Esophagus muscularis mucosa (tissue), 4 donors: ENCODE measurements at regions of chr3 and their contacts with region 1.

Region 1: DNA sequence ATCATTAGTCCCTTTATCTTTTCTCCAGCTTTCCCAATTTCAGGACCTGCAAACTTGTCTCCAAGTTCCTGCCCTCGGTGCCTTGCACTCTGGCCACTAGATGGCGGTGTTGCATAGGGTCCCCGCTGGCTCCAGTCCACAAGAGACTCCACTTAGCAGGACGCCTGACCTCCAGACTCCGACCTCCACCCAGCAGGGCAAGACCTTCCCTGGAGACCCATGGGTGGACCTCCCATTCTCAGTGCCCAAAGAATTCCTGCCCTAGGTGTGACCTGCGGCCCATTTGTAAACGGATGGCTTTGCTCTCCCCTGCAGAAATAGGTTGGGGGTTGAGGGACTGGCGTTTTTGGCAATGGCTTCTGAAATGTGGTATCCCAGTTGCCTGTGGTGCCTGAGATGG is 82.6 kb downstream of the LSM3 start:
- DNase-seq: peak; percentile 95
- H3K4me3 ChIP-seq: no peak overlapping the region
- H3K27ac ChIP-seq: no peak overlapping the region
- H3K4me1 ChIP-seq: peaks cover 3 to 7% (median 4%) of the 10 kb centered on the region in 4 donors
- H3K27me3 ChIP-seq: no peaks in the 10 kb centered on the region
- CTCF ChIP-seq: peak; percentile 95 to 98 (median 97)
- EP300 ChIP-seq: no peak
- POLR2A ChIP-seq: no peak

Region 2: GRCh38 chr3:14031271-14031670 is 230.0 kb before region 1 on chr3:
- intact Hi-C with region 1: no loop called
- DNase-seq: no peak
- H3K4me3 ChIP-seq: no peak overlapping the region
- H3K27ac ChIP-seq: no peak overlapping the region
- H3K4me1 ChIP-seq: no peaks in the 10 kb centered on the region
- H3K27me3 ChIP-seq: no peaks in the 10 kb centered on the region
- CTCF ChIP-seq: no peak
- EP300 ChIP-seq: no peak
- POLR2A ChIP-seq: no peak

Region 3: GRCh38 chr3:14203521-14204079 is 57.6 kb before region 1 on chr3:
- intact Hi-C with region 1: loop called (anchors 5 kb)
- DNase-seq: no peak
- H3K4me3 ChIP-seq: no peak overlapping the region
- H3K27ac ChIP-seq: peak overlapping the region in 1 of 4 donors; percentile 51
- H3K4me1 ChIP-seq: peaks cover 8 to 27% (median 16%) of the 10 kb centered on the region in 4 donors
- H3K27me3 ChIP-seq: no peaks in the 10 kb centered on the region
- CTCF ChIP-seq: peak; percentile 76 to 85 (median 82)
- EP300 ChIP-seq: no peak
- POLR2A ChIP-seq: no peak

Region 4: DNA sequence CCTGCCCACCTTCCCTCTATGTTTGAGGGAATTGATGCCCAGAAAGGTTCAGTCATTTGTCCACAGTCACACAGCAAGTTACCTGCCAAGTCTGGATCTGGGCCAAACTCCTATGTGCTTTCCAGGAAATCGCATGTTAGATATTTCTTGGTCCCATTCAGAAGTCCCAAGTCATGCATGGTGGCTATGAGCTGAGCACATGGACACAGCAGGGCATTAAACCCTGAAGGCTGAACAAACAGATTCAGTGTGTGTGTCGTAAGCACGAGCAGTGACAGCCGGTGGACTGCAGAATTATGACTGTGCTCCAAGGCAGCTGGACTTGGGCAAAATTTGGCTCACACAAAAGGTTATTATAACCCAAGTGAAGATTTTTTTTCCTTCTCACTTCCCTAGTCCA is 129.8 kb after region 1 on chr3:
- intact Hi-C with region 1: loop called (anchors 10 kb)
- DNase-seq: no peak
- H3K4me3 ChIP-seq: no peak overlapping the region
- H3K27ac ChIP-seq: peak overlapping the region; percentile 45 to 59 (median 50)
- H3K4me1 ChIP-seq: peaks cover 0 to 43% (median 40%) of the 10 kb centered on the region in 4 donors
- H3K27me3 ChIP-seq: peaks cover 0 to 6% (median 0%) of the 10 kb centered on the region in 4 donors
- CTCF ChIP-seq: no peak
- EP300 ChIP-seq: no peak
- POLR2A ChIP-seq: no peak

Region 5: DNA sequence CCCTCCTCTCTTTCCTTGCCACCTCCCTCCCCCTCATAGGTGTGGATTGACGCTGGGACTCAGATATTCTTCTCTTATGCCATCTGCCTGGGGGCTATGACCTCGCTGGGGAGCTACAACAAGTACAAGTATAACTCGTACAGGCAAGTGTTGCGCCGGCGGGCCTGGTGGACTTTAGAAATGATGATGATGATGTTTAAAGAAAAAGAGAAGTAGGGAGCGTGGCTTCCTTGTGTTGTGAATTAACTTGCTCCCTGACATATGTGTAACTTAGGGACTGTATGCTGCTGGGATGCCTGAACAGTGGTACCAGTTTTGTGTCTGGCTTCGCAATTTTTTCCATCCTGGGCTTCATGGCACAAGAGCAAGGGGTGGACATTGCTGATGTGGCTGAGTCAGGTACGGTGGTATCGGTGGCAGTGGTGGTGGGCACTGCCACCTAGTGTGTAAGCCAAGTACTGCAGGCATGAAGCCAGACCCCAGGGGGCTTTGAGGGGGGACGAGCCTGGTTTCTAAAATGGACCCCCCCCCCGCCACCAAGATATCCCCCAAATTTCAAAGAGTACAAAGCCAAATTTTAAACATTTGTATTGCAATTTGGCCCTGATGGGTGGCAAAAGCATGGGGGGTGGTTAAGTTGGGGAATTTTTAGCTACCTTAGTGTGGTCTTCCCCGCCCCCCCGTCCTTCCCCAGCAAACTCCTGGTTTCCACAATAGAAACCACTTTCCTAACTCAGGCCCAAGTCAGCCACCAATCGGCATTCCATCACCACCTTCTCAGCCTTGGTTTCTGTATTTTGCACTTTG is 206.8 kb after region 1 on chr3:
- intact Hi-C with region 1: loop called (anchors 1 kb)
- DNase-seq: no peak
- H3K4me3 ChIP-seq: no peak overlapping the region
- H3K27ac ChIP-seq: no peak overlapping the region
- H3K4me1 ChIP-seq: peaks cover 0 to 8% (median 5%) of the 10 kb centered on the region in 4 donors
- H3K27me3 ChIP-seq: no peaks in the 10 kb centered on the region
- CTCF ChIP-seq: peak; percentile 86 to 95 (median 92)
- EP300 ChIP-seq: no peak
- POLR2A ChIP-seq: no peak

Region 6: GRCh38 chr3:14548321-14548729 is 287.1 kb after region 1 on chr3:
- intact Hi-C with region 1: loop called (anchors 5 kb)
- DNase-seq: no peak
- H3K4me3 ChIP-seq: no peak overlapping the region
- H3K27ac ChIP-seq: no peak overlapping the region
- H3K4me1 ChIP-seq: peaks cover 4 to 10% (median 8%) of the 10 kb centered on the region in 4 donors
- H3K27me3 ChIP-seq: peaks cover 0 to 29% (median 0%) of the 10 kb centered on the region in 4 donors
- CTCF ChIP-seq: peak; percentile 50 to 63 (median 56)
- EP300 ChIP-seq: no peak
- POLR2A ChIP-seq: no peak